Naive thymus-derived CD8-positive, alpha-beta T cell (primary cell): ENCODE measurements at regions of chr9 and their contacts with region 1.

Region 1: DNA sequence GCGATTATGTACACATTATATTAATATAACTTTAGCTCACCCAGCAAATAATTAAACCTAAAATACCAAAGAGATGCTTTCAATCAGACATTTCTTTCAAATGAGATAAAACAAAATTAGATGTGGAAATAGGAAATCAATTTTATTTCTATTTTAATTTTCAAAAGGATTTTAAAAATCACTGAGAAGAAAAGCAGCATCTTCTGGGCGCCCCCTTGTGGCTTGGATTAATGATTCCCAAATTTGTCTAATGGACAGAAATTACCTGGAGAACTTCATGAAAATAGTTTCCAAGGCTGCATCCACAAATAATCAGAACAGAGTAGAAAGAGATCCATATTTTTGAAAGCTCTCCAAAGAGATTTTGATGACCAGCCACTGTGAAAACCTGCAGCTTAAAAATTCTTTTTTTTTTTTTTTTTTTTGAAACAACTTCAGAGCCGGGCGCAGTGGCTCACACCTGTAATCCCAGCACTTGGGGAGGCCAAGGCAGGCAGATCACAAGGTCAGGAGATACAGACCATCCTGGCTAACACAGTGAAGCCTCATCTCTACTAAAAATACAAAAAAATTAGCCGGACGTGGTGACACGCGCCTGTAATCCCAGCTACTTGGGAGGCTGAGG is 50.9 kb upstream of the CEMIP2 start:
- DNase-seq: peak; percentile 16 to 66 (median 44)
- ATAC-seq: no peak
- H3K4me3 Mint-ChIP-seq: no peak overlapping the region
- H3K27ac Mint-ChIP-seq: no peak overlapping the region
- H3K4me1 Mint-ChIP-seq: peaks cover 11 to 24% (median 19%) of the 10 kb centered on the region in 4 donors
- H3K27me3 Mint-ChIP-seq: no peaks in the 10 kb centered on the region

Region 2: DNA sequence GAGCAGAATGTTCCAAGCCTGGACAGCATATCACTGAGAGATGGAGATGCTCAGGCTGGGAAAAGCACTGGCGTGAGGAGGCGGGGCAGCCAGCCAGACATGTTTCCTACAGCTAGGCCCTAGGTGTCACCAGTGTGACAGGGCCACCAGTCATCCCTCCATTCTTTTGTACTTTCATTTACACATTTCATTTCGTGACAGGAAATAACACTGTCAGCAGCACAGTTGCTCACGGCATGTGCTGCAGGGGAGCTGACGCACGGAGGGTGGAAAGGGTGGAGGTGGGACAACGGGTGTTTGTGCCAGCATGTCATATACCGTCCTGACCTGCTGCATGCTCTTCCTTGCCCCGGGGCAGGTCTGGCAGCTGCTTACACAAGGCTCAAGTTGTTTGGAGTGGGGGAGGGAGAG is 36.1 kb before region 1 on chr9:
- POLR2A ChIA-PET with region 1: interaction called, 13 read pairs
- DNase-seq: peak; percentile 64 to 93 (median 87)
- ATAC-seq: peak; percentile 95
- H3K4me3 Mint-ChIP-seq: peak overlapping the region; percentile 62 to 80 (median 78)
- H3K27ac Mint-ChIP-seq: peak overlapping the region; percentile 95 to 100 (median 99)
- H3K4me1 Mint-ChIP-seq: peaks cover 26 to 54% (median 53%) of the 10 kb centered on the region in 4 donors
- H3K27me3 Mint-ChIP-seq: no peaks in the 10 kb centered on the region

Region 3: DNA sequence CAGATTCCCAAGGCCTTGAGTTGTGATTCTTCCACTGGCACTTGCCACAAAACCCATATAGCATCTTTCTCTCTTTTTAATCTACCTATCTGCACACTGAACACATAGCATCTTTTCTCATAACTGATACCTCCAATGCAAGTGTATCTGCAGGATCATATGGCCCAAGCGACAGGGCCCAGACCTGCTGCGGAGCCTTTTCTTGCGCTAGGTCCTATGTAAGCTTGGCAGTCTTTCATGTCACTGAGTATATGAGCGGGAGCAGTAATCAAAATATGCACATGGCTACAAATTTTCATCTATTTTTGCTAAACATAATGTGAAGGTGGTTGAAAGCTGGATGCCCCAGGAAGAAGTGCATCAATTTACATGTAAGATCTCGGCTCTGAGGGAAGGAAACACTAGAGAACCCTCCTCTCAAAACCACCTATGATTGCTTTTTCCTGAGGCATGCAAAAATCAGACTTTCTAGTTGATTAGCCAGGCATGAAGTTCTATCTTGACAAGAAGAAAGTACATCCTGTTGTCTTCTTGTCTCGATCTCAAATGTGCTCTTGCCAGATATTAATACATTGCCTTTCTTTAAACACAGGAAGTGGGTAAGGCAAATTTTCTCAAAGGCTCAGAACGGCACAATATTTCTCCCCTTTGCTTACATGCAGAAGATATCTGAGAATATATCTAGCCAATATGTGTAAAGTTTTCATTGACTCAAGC is 24.0 kb before region 1 on chr9:
- POLR2A ChIA-PET with region 1: interaction called, 11 read pairs
- DNase-seq: peak in 6 of 10 donors; percentile 15 to 84 (median 64)
- ATAC-seq: peak; percentile 89 to 92
- H3K4me3 Mint-ChIP-seq: peak overlapping the region; percentile 34 to 78 (median 74)
- H3K27ac Mint-ChIP-seq: peak overlapping the region; percentile 93 to 99 (median 98)
- H3K4me1 Mint-ChIP-seq: peaks cover 35 to 72% (median 71%) of the 10 kb centered on the region in 4 donors
- H3K27me3 Mint-ChIP-seq: no peaks in the 10 kb centered on the region